Heart right ventricle (tissue), 16 donors: ENCODE measurements at regions of chr21 and their contacts with region 1.

Region 1: DNA sequence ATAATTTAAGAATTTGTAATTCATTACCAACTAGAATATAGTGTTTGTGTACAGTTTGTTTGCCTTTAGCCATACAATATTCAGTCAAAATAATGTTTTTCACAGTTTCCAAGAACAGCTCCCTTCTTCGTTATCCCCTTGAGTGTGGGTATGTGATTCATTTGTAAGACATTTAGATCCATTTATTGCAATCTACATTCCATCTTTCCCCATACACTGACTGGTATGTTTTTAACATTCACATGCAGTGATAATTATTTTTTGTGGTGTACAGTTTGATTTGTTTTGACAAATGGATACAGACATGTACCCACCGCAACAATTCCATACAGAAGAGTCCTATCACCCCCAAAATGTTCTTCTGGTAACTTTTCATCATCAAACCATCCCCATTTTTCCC is 589.1 kb upstream of the ADAMTS5 start:
- DNase-seq: no peak
- ATAC-seq: no peak
- H3K4me3 ChIP-seq: no peak overlapping the region
- H3K27ac ChIP-seq: no peak overlapping the region
- H3K4me1 ChIP-seq: no peaks in the 10 kb centered on the region
- H3K27me3 ChIP-seq: no peaks in the 10 kb centered on the region
- CTCF ChIP-seq: no peak

Region 2: GRCh38 chr21:26881504-26882228 is 674.3 kb before region 1 on chr21:
- intact Hi-C with region 1: loop called in 5 of 10 experiments (anchors 10 kb)
- DNase-seq: no peak
- ATAC-seq: no peak
- H3K4me3 ChIP-seq: no peak overlapping the region
- H3K27ac ChIP-seq: no peak overlapping the region
- H3K4me1 ChIP-seq: no peaks in the 10 kb centered on the region
- H3K27me3 ChIP-seq: no peaks in the 10 kb centered on the region
- CTCF ChIP-seq: peak; percentile 15 to 61 (median 47)

Region 3: DNA sequence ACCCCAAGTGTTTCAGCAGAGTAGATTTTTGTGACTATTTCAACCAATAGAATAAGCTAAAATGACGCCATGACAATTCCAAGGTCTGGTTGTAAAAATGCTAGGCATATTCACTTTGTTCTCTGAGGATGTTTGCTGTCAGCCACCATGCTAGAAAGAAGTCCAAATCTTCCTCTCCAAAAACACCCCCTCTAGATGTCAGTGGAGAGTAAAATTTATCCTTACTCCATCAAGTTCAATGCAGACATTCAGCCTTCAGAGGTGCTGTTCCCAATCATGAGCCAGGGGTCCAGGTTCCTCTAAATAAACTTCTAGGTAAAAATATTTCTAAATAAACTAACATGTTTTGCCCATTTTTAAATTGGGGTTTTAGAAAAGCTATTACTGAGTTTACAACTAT is 193.7 kb before region 1 on chr21:
- intact Hi-C with region 1: loop called in 6 of 10 experiments (anchors 5 to 10 kb)
- DNase-seq: no peak
- ATAC-seq: no peak
- H3K4me3 ChIP-seq: no peak overlapping the region
- H3K27ac ChIP-seq: no peak overlapping the region
- H3K4me1 ChIP-seq: no peaks in the 10 kb centered on the region
- H3K27me3 ChIP-seq: no peaks in the 10 kb centered on the region
- CTCF ChIP-seq: peak in 8 of 9 donors; percentile 17 to 55 (median 29)